CD4-positive, alpha-beta memory T cell (primary cell): ENCODE measurements at regions of chr11 and their contacts with region 1.

Region 1: GRCh38 chr11:125887373-125888324 is at the start of gene HYLS1:
- DNase-seq: peak; percentile 96 to 99 (median 96)
- H3K4me3 ChIP-seq: peak within 1 kb of the TSS; percentile 67 to 73
- H3K4me3 Mint-ChIP-seq: peak within 1 kb of the TSS; percentile 89 to 99 (median 94)
- H3K27ac ChIP-seq: peak within 1 kb of the TSS; percentile 79
- H3K27ac Mint-ChIP-seq: peak within 1 kb of the TSS; percentile 96 to 99 (median 98)
- H3K4me1 ChIP-seq: peaks cover 33% of the 10 kb centered on the region
- H3K4me1 Mint-ChIP-seq: peaks cover 20 to 45% (median 30%) of the 10 kb centered on the region in 4 donors
- H3K27me3 ChIP-seq: no peaks in the 10 kb centered on the region
- H3K27me3 Mint-ChIP-seq: peaks cover 0 to 6% of the 10 kb centered on the region in 2 donors
- total RNA-seq, gene HYLS1: 8.1 to 8.2 TPM

Region 2: DNA sequence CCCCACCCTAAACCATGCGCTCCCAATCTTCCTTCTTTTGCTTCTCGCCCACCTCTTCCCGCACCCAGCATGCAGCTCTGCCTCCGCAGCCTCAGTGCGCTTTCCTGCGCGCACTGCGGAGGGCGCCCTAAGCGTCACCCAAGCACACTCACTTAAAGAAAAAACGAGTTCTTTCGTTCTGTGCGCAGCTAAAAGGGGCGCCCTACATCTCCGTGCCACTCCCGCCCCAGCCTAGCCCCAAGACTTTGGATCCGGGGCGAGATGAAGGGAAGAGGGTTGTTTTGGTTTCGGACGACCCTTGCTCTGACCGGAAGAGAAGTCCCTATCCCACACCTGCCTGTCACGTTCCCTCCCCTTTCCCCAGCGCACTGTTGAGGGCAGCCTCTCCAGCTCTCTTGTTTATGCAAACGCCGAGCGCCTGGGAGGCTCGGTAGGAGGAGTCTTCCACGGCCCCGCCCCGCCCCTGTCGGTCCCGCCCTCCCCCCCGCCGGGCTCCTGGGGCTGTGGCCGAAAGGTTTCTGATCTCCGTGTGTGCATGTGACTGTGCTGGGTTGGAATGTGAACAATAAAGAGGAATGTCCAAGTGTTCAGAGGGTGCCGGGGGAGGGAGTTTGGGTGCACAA is 1140.9 kb before region 1 on chr11:
- CTCF ChIA-PET with region 1: no interaction called
- POLR2A ChIA-PET with region 1: no interaction called
- intact Hi-C with region 1: loop called (anchors 2 kb)
- DNase-seq: peak; percentile 80 to 86 (median 85)
- H3K4me3 ChIP-seq: peak overlapping the region; percentile 76 to 97
- H3K4me3 Mint-ChIP-seq: peak overlapping the region; percentile 96 to 99 (median 98)
- H3K27ac ChIP-seq: peak overlapping the region; percentile 58
- H3K27ac Mint-ChIP-seq: peak overlapping the region; percentile 83 to 98 (median 94)
- H3K4me1 ChIP-seq: peaks cover 6% of the 10 kb centered on the region
- H3K4me1 Mint-ChIP-seq: peaks cover 6 to 21% (median 9%) of the 10 kb centered on the region in 4 donors
- H3K27me3 ChIP-seq: no peaks in the 10 kb centered on the region
- H3K27me3 Mint-ChIP-seq: peaks cover 0 to 1% of the 10 kb centered on the region in 2 donors

Region 3: GRCh38 chr11:125568970-125569914 is 318.4 kb before region 1 on chr11 and contains the start of gene EI24:
- CTCF ChIA-PET with region 1: interaction called, 4 read pairs
- POLR2A ChIA-PET with region 1: interaction called, 17 read pairs
- intact Hi-C with region 1: loop called (anchors 5 kb)
- DNase-seq: peak; percentile 83 to 86 (median 85)
- H3K4me3 ChIP-seq: peak within 1 kb of the TSS; percentile 84 to 93
- H3K4me3 Mint-ChIP-seq: peak within 1 kb of the TSS; percentile 88 to 95 (median 93)
- H3K27ac ChIP-seq: peak within 1 kb of the TSS; percentile 81
- H3K27ac Mint-ChIP-seq: peak within 1 kb of the TSS; percentile 85 to 97 (median 94)
- H3K4me1 ChIP-seq: peaks cover 25% of the 10 kb centered on the region
- H3K4me1 Mint-ChIP-seq: peaks cover 13 to 32% (median 18%) of the 10 kb centered on the region in 4 donors
- H3K27me3 ChIP-seq: no peaks in the 10 kb centered on the region
- H3K27me3 Mint-ChIP-seq: peaks cover 0 to 1% of the 10 kb centered on the region in 2 donors
- total RNA-seq, gene EI24: 35.5 to 36.8 TPM

Region 4: DNA sequence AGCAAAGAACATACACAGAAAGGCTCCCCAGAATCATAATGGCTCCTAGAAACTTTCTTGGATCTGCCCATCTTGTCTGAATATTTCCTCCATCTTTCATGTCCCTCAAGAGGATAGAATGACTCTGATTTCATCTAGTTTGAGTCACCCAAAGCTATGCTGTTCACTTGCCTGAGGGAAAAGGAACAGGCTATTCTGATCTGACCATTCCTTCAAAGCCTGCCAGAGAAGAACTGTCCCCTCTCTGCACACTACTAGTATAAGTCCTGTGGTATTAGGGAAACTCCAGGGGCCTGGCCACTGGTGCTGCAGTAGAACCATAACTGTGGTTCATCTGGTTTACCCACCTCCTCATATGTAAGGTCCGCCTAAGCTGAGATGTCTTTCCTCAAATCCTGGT is 144.0 kb before region 1 on chr11:
- CTCF ChIA-PET with region 1: no interaction called
- POLR2A ChIA-PET with region 1: no interaction called
- intact Hi-C with region 1: no loop called
- DNase-seq: no peak
- H3K4me3 ChIP-seq: no peak overlapping the region
- H3K4me3 Mint-ChIP-seq: no peak overlapping the region
- H3K27ac ChIP-seq: no peak overlapping the region
- H3K27ac Mint-ChIP-seq: no peak overlapping the region
- H3K4me1 ChIP-seq: no peaks in the 10 kb centered on the region
- H3K4me1 Mint-ChIP-seq: no peaks in the 10 kb centered on the region
- H3K27me3 ChIP-seq: no peaks in the 10 kb centered on the region
- H3K27me3 Mint-ChIP-seq: peaks cover 6 to 7% of the 10 kb centered on the region in 2 donors

Region 5: DNA sequence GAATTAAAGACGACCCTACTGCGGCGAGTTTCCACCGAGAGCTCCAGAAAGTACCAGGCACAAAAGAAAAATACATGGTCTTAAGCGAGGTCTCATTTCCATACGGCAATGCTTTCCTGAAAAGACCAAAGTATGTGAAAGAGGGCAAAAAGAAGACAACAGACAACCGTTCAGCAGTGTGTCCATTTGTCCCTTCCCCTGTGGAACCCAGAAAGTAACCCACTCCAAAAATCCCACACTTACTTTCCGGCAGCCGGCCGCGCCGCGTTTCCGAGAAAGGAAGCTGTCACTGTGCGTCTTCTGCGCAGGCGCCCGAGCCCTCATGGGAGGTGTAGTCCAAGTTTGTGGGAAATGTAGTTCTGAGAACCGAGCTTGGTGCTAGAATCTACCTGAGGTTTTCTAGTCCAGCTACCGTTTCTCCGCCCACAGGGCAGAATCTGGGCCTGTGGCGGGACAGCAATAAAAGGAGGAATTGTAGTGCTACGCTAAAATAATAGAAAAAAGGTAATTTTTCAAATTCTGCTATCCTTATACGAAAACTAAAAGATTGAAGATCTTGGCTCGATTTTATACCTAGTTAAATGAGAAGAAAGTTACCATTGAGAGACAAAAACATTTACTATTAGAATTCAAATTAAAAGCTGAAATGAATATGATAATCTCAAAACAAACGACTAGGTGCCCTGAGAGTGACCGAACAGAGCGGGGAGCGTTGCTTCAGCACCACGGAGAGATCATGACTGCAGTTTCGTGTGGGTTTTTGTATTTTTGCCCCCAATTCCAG is 15.5 kb after region 1 on chr11 and contains the start of gene PUS3:
- CTCF ChIA-PET with region 1: interaction called, 11 read pairs
- POLR2A ChIA-PET with region 1: interaction called, 52 read pairs
- intact Hi-C with region 1: loop called (anchors 1 kb)
- DNase-seq: peak; percentile 83 to 88 (median 84)
- H3K4me3 ChIP-seq: peak within 1 kb of the TSS; percentile 45 to 58
- H3K4me3 Mint-ChIP-seq: peak within 1 kb of the TSS; percentile 92 to 97 (median 95)
- H3K27ac ChIP-seq: peak within 1 kb of the TSS; percentile 81
- H3K27ac Mint-ChIP-seq: peak within 1 kb of the TSS; percentile 88 to 96 (median 92)
- H3K4me1 ChIP-seq: peaks cover 18% of the 10 kb centered on the region
- H3K4me1 Mint-ChIP-seq: peaks cover 20 to 49% (median 37%) of the 10 kb centered on the region in 4 donors
- H3K27me3 ChIP-seq: peaks cover 12% of the 10 kb centered on the region
- H3K27me3 Mint-ChIP-seq: peaks cover 19 to 22% of the 10 kb centered on the region in 2 donors
- total RNA-seq, gene PUS3: 12.4 to 12.6 TPM

Region 6: GRCh38 chr11:126194121-126194543 is 306.5 kb after region 1 on chr11:
- CTCF ChIA-PET with region 1: no interaction called
- POLR2A ChIA-PET with region 1: no interaction called
- intact Hi-C with region 1: no loop called
- DNase-seq: peak in 4 of 5 donors; percentile 26 to 36 (median 30)
- H3K4me3 ChIP-seq: no peak overlapping the region
- H3K4me3 Mint-ChIP-seq: peak overlapping the region in 1 of 8 donors; percentile 45
- H3K27ac ChIP-seq: no peak overlapping the region
- H3K27ac Mint-ChIP-seq: peak overlapping the region in 1 of 7 donors; percentile 42
- H3K4me1 ChIP-seq: no peaks in the 10 kb centered on the region
- H3K4me1 Mint-ChIP-seq: peaks cover 0 to 3% (median 0%) of the 10 kb centered on the region in 4 donors
- H3K27me3 ChIP-seq: no peaks in the 10 kb centered on the region
- H3K27me3 Mint-ChIP-seq: no peaks in the 10 kb centered on the region

Region 7: DNA sequence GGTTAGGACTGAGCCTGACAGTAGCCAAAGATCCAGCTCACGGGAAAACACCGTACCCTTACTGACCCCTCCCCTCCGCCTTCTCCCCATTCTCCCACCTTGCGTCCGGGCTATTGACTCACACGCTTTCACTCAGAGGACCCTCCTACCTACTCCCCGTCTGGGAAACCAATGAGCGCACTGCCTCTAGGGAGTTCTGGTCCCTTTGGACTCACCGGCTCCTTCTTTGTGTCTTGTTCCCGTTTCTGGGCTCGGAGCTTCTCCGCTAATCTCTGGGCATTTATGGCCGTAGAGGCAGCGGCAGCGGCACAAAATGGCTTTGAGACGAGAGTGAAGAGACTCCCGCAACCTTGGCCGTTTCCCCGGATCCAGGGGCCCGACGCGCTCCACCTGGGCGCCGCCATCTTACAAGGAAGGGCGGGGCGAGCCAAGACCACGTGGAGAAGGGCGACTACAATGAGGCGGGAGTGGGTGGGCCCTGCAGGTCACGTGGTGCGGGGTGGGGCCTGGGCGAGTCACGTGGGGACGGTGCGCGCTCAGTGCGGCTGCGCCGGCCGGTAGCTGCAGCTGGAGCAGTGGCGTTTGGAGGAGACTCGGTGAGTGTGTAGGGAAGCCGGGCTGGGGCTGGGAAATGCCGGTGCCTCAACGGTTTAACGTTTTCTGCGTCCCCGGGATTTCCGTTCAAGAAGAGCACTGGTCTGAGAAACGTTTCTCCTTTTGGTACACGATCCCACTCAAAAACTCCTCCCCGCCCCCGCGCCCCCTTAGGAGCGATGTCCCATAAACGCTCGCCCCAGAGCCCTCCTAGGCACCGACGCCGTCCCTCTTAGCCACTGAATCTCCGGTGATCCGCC is 323.8 kb after region 1 on chr11 and contains the starts of genes FAM118B and RPUSD4:
- CTCF ChIA-PET with region 1: interaction called, 3 read pairs
- POLR2A ChIA-PET with region 1: interaction called, 3 read pairs
- intact Hi-C with region 1: loop called (anchors 1 kb)
- DNase-seq: peak; percentile 98
- H3K4me3 ChIP-seq: peak within 1 kb of the TSS; percentile 44 to 91
- H3K4me3 Mint-ChIP-seq: peak within 1 kb of the TSS; percentile 99 to 100 (median 99)
- H3K27ac ChIP-seq: peak within 1 kb of the TSS; percentile 67
- H3K27ac Mint-ChIP-seq: peak within 1 kb of the TSS; percentile 91 to 99 (median 98)
- H3K4me1 ChIP-seq: peaks cover 24% of the 10 kb centered on the region
- H3K4me1 Mint-ChIP-seq: peaks cover 27 to 43% (median 32%) of the 10 kb centered on the region in 4 donors
- H3K27me3 ChIP-seq: no peaks in the 10 kb centered on the region
- H3K27me3 Mint-ChIP-seq: no peaks in the 10 kb centered on the region
- total RNA-seq, gene FAM118B: 12.6 to 13.2 TPM
- total RNA-seq, gene RPUSD4: 39.3 to 41.2 TPM

Region 8: DNA sequence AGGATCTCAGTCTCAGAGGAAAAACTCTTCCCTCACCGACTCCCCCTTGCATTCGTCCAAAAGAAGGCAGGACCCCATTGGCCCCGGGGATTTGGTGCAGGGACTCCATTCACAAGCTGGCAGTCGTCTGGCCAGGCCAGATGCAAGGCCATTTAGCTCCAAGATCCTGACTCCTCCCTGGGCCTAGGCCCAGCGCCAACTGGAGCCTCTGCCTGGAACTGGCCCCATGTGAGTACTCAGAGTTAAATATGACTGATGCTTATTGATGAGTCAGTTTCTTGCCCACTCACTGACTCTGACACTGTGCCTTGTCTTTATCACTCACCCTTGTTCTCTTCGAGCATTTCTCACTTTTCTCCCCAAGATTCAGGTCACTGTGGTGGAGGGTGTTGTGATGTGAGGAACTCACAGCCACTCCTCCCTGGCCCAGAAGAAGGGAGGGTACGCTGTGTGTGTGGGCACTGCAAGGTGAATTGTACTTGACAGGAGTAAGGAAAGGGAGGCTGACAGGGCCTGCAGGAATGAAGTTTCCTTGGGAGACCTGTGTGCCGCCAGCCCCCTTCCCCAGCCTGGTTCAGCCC is 444.6 kb after region 1 on chr11:
- CTCF ChIA-PET with region 1: no interaction called
- POLR2A ChIA-PET with region 1: no interaction called
- intact Hi-C with region 1: no loop called
- DNase-seq: no peak
- H3K4me3 ChIP-seq: no peak overlapping the region
- H3K4me3 Mint-ChIP-seq: no peak overlapping the region
- H3K27ac ChIP-seq: no peak overlapping the region
- H3K27ac Mint-ChIP-seq: peak overlapping the region in 2 of 7 donors; percentile 36 to 59
- H3K4me1 ChIP-seq: no peaks in the 10 kb centered on the region
- H3K4me1 Mint-ChIP-seq: peaks cover 5 to 17% (median 13%) of the 10 kb centered on the region in 4 donors
- H3K27me3 ChIP-seq: no peaks in the 10 kb centered on the region
- H3K27me3 Mint-ChIP-seq: no peaks in the 10 kb centered on the region